Caco-2 (cell line): ENCODE measurements at regions of chr16 and their contacts with region 1.

Region 1: GRCh38 chr16:56600398-56600999 is 7.9 kb upstream of the MT2A start:
- DNase-seq: peak; percentile 53 to 58
- H3K4me3 ChIP-seq: no peak overlapping the region
- H3K4me3 Mint-ChIP-seq: no peak overlapping the region
- H3K27ac Mint-ChIP-seq: no peak overlapping the region
- H3K4me1 ChIP-seq: no peaks in the 10 kb centered on the region
- H3K4me1 Mint-ChIP-seq: peaks cover 8% of the 10 kb centered on the region
- H3K27me3 ChIP-seq: no peaks in the 10 kb centered on the region
- H3K27me3 Mint-ChIP-seq: peaks cover 11% of the 10 kb centered on the region
- CTCF ChIP-seq: peak; percentile 67 to 84

Region 2: DNA sequence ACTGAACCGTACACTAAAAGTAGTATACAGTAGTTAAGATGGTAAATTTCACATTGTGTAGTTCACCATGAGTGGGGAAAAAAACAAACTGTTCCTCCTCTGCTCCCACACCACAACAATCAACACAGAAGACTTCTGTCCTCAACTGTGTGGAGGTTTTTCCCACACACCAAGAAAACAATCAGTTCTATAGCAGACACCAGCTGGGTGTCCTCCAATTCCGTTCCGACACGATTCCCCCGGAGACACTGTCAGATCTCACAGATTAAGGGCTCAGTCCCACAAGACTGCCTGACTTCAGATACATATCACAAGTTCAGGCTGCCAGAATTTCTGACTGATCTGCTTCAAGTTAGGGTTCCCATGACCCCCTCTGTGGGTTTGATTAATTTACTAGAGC is 112.5 kb before region 1 on chr16:
- CTCF ChIA-PET with region 1: no interaction called
- POLR2A ChIA-PET with region 1: no interaction called
- intact Hi-C with region 1: no loop called
- DNase-seq: no peak
- H3K4me3 ChIP-seq: no peak overlapping the region
- H3K4me3 Mint-ChIP-seq: no peak overlapping the region
- H3K27ac Mint-ChIP-seq: no peak overlapping the region
- H3K4me1 ChIP-seq: no peaks in the 10 kb centered on the region
- H3K4me1 Mint-ChIP-seq: no peaks in the 10 kb centered on the region
- H3K27me3 ChIP-seq: no peaks in the 10 kb centered on the region
- H3K27me3 Mint-ChIP-seq: no peaks in the 10 kb centered on the region
- CTCF ChIP-seq: no peak

Region 3: DNA sequence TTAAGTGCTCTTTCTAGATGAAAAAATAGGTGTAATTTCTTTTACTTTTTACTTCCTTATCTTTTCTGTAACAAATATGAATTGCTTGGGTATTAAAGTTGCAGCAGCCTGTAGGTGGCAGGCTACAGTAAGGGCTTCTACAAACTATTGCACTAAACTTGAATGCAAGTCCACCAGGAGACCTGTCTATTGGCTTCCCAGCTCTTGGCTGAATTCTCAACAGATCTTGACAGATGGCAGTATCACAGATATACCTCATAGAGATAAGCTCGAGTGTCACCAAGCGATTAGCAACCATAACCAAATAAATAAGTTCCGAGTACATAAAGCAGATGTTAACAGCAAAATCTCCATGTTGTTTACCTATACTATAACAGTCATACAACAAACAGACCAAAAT is 86.5 kb before region 1 on chr16:
- CTCF ChIA-PET with region 1: interaction called, 16 read pairs
- POLR2A ChIA-PET with region 1: no interaction called
- intact Hi-C with region 1: loop called (anchors 1 kb)
- DNase-seq: peak; percentile 67 to 71
- H3K4me3 ChIP-seq: no peak overlapping the region
- H3K4me3 Mint-ChIP-seq: no peak overlapping the region
- H3K27ac Mint-ChIP-seq: no peak overlapping the region
- H3K4me1 ChIP-seq: no peaks in the 10 kb centered on the region
- H3K4me1 Mint-ChIP-seq: no peaks in the 10 kb centered on the region
- H3K27me3 ChIP-seq: no peaks in the 10 kb centered on the region
- H3K27me3 Mint-ChIP-seq: no peaks in the 10 kb centered on the region
- CTCF ChIP-seq: peak; percentile 49 to 83

Region 4: GRCh38 chr16:56558024-56558747 is 42.3 kb before region 1 on chr16:
- CTCF ChIA-PET with region 1: no interaction called
- POLR2A ChIA-PET with region 1: no interaction called
- intact Hi-C with region 1: no loop called
- DNase-seq: no peak
- H3K4me3 ChIP-seq: no peak overlapping the region
- H3K4me3 Mint-ChIP-seq: no peak overlapping the region
- H3K27ac Mint-ChIP-seq: no peak overlapping the region
- H3K4me1 ChIP-seq: no peaks in the 10 kb centered on the region
- H3K4me1 Mint-ChIP-seq: no peaks in the 10 kb centered on the region
- H3K27me3 ChIP-seq: peaks cover 1% of the 10 kb centered on the region; the same call in 1 of the 2 replicates
- H3K27me3 Mint-ChIP-seq: peaks cover 19% of the 10 kb centered on the region
- CTCF ChIP-seq: no peak

Region 5: GRCh38 chr16:56576585-56577293 is 23.8 kb before region 1 on chr16:
- CTCF ChIA-PET with region 1: interaction called, 4 read pairs
- POLR2A ChIA-PET with region 1: no interaction called
- intact Hi-C with region 1: loop called (anchors 1 kb)
- DNase-seq: peak; percentile 84 to 85
- H3K4me3 ChIP-seq: no peak overlapping the region
- H3K4me3 Mint-ChIP-seq: no peak overlapping the region
- H3K27ac Mint-ChIP-seq: peak overlapping the region; percentile 18
- H3K4me1 ChIP-seq: no peaks in the 10 kb centered on the region
- H3K4me1 Mint-ChIP-seq: no peaks in the 10 kb centered on the region
- H3K27me3 ChIP-seq: no peaks in the 10 kb centered on the region
- H3K27me3 Mint-ChIP-seq: peaks cover 8% of the 10 kb centered on the region
- CTCF ChIP-seq: peak; percentile 64 to 77

Region 6: DNA sequence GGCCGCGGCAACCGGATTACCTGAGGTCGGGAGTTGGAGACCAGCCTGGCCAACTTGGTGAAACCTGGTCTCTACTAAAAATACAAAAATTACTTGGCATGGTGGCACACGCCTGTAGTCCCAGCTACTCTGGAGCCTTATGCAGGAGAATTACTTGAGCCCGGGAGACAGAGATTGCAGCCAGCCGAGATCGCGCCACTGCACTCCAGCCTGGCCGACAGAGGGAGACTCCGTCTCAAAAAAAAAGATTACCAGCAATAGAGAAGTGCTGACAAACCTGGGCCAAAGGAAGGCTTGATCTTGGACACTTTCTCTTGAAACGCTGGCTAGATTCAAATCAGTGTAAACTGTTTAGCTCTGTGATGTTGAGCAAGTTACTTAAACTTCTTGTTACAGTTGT is 73.4 kb after region 1 on chr16:
- CTCF ChIA-PET with region 1: interaction called, 6 read pairs
- POLR2A ChIA-PET with region 1: no interaction called
- intact Hi-C with region 1: loop called (anchors 1 kb)
- DNase-seq: peak in 1 of 2 experiments; percentile 70
- H3K4me3 ChIP-seq: no peak overlapping the region
- H3K4me3 Mint-ChIP-seq: no peak overlapping the region
- H3K27ac Mint-ChIP-seq: no peak overlapping the region
- H3K4me1 ChIP-seq: peaks cover 7% of the 10 kb centered on the region
- H3K4me1 Mint-ChIP-seq: no peaks in the 10 kb centered on the region
- H3K27me3 ChIP-seq: peaks cover 3% of the 10 kb centered on the region
- H3K27me3 Mint-ChIP-seq: peaks cover 32% of the 10 kb centered on the region
- CTCF ChIP-seq: peak; percentile 70 to 82